ENCODE measurements at regions of chr21 and their contacts with region 1.

Region 1: DNA sequence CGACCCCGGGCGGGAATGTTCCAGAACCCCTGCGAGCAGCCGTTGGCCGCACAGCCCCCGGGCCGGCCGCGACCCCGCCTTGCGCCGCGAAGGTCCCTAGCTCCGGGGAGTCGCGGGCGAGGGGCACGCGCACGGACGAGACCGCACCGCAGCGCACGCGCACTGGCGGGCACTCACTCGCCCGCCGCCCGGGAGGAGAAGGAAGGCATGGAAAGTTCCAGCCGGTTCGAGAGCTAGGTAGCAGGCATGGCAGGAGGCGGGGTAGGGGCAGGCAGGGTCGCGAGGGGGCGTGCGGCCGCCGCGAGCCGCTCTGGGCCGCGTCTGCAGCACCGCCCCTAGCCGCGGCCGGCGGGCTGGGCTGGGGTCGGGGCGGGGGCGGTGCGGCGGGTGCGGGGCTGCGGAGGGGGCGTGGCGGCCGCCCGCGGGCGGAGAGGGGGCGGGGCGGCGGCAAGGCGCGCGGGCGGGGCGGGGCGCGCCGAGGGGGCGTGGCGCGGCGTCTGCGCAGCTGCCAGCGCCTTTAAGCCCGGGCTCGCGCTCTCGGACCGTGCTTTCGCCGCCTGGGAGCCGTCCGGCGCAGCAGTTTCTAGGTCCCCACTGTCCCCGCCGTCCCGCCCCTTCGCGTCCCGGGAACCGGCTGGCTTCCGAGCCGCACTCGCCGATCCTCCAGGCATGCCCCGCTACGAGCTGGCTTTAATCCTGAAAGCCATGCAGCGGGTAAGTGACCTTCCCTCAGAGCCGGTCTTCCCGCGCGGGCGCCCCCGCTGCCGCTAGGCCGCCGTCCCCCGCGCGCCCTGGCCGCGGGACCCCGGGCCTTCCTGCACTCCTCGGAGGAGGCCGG is at the starts of genes MRPS6 and SLC5A3:
- DNase-seq: peak; percentile 67
- H3K4me3 Mint-ChIP-seq: peak within 1 kb of the TSS; percentile 96
- H3K27ac Mint-ChIP-seq: peak within 1 kb of the TSS; percentile 90
- H3K4me1 Mint-ChIP-seq: peaks cover 44% of the 10 kb centered on the region
- H3K27me3 Mint-ChIP-seq: peaks cover 4% of the 10 kb centered on the region
- total RNA-seq, gene MRPS6: 137 and 139 TPM in 2 replicates
- total RNA-seq, gene SLC5A3: 45.4 and 48.0 TPM in 2 replicates

Region 2: DNA sequence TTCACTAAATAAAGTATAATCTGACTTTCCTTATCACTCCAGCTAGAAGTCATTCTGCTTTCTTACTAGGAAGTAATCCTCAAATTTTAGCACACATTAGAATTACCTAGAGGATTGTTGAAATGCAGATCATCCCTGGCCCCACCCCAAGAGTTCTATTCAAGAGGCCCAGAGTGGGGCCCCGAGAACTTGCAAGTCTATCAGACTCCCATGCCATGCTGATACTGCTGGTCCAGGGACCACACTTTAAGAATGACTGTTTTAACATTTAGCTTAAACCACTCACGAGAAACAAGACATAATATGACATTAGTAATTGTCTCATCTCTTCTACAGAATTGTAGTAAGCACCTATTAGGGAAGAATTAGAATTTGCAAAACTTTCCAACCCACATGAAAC is 1337.7 kb before region 1 on chr21:
- intact Hi-C with region 1: no loop called
- DNase-seq: no peak
- H3K4me3 Mint-ChIP-seq: no peak overlapping the region
- H3K27ac Mint-ChIP-seq: no peak overlapping the region
- H3K4me1 Mint-ChIP-seq: peaks cover 17% of the 10 kb centered on the region
- H3K27me3 Mint-ChIP-seq: no peaks in the 10 kb centered on the region

Region 3: GRCh38 chr21:33915368-33916199 is 157.7 kb before region 1 on chr21 and contains the start of gene ATP5PO:
- intact Hi-C with region 1: loop called (anchors 1 kb)
- DNase-seq: peak; percentile 97
- H3K4me3 Mint-ChIP-seq: peak within 1 kb of the TSS; percentile 99
- H3K27ac Mint-ChIP-seq: peak within 1 kb of the TSS; percentile 98
- H3K4me1 Mint-ChIP-seq: peaks cover 39% of the 10 kb centered on the region
- H3K27me3 Mint-ChIP-seq: no peaks in the 10 kb centered on the region
- total RNA-seq, gene ATP5PO: 168 and 176 TPM in 2 replicates

Region 4: DNA sequence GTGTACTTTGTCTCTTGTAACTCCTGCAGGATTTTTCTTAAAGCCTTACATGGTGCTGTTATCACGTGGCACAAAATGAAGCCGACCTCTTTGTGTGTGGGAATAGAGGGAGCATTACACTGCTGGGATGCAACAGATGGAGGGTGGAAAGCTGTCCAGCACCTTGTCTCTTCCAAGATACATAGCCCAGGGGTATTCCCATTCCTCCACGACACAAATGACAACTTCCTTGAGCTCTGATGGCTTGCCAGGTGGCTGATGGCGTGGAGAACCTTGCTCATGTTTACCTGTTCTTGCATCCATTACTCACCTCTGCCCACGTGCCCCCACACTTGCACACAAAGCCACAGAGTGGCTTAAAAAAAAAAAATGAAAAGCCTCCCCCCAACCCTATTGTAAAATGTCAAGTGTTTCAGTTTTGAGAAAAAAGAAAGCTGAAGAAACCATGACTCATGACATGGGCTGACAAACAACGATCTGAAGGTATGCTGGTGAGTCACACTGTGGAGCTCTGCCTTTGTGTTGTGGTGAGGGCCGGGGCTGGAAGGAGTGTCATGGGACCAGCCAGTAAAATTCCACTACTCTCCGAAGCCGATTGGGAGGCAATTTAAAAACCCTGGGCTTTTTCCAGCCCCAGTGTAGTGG is 125.7 kb before region 1 on chr21:
- intact Hi-C with region 1: loop called (anchors 1 kb)
- DNase-seq: peak; percentile 85
- H3K4me3 Mint-ChIP-seq: peak overlapping the region; percentile 65
- H3K27ac Mint-ChIP-seq: peak overlapping the region; percentile 97
- H3K4me1 Mint-ChIP-seq: peaks cover 77% of the 10 kb centered on the region
- H3K27me3 Mint-ChIP-seq: peaks cover 4% of the 10 kb centered on the region

Region 5: GRCh38 chr21:34046917-34047316 is 26.3 kb before region 1 on chr21:
- intact Hi-C with region 1: loop called (anchors 2 kb)
- DNase-seq: no peak
- H3K4me3 Mint-ChIP-seq: no peak overlapping the region
- H3K27ac Mint-ChIP-seq: no peak overlapping the region
- H3K4me1 Mint-ChIP-seq: peaks cover 7% of the 10 kb centered on the region
- H3K27me3 Mint-ChIP-seq: peaks cover 4% of the 10 kb centered on the region

Region 6: DNA sequence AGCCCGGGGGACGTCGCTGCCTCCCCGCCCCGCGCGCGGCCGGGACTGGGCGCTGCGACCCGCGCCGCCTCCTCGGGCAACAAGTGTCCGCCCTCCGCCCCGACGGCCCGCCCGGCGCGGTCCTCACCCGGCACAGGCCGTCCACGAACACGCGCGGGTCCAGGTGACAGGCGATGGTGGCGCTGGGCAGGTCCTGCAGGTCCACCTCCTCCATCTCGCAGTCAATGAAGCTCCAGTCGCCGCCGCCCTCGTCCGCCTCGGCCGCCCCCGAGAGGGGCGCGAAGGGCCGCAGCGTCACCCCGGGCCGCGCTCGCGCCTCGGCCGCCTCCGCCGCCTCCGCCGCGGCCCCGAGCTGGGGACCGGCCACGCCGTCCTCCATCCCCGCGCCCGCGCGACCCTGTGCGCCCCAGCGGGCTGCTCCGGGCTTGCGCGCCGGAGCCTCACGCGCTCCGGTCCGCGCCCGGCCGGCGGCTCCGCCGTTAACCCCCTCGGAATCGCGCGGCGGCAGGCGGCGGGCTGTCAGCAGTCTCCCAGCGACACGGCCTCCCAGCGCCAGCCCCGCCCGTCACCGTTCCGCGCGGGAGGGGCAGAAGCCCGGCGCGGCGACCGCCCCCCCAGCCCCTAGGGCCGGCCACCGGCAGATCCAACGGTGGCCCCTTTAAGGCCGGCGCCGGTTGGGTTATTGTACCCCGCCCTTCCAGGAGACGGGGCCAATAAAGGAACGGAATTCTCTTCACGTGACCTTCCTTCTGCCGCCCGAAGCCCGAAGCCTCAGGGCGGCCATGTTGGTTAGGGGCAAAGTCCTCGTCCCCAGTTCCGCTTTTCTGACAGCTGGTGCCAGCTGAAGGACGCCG is 541.6 kb after region 1 on chr21 and contains the start of gene RCAN1:
- intact Hi-C with region 1: loop called (anchors 10 kb)
- DNase-seq: peak; percentile 86
- H3K4me3 Mint-ChIP-seq: peak within 1 kb of the TSS; percentile 85
- H3K27ac Mint-ChIP-seq: peak within 1 kb of the TSS; percentile 57
- H3K4me1 Mint-ChIP-seq: peaks cover 30% of the 10 kb centered on the region
- H3K27me3 Mint-ChIP-seq: peaks cover 5% of the 10 kb centered on the region
- total RNA-seq, gene RCAN1: 10.7 and 11.1 TPM in 2 replicates